ENCODE measurements at regions of chr5 and their contacts with region 1.

Region 1: DNA sequence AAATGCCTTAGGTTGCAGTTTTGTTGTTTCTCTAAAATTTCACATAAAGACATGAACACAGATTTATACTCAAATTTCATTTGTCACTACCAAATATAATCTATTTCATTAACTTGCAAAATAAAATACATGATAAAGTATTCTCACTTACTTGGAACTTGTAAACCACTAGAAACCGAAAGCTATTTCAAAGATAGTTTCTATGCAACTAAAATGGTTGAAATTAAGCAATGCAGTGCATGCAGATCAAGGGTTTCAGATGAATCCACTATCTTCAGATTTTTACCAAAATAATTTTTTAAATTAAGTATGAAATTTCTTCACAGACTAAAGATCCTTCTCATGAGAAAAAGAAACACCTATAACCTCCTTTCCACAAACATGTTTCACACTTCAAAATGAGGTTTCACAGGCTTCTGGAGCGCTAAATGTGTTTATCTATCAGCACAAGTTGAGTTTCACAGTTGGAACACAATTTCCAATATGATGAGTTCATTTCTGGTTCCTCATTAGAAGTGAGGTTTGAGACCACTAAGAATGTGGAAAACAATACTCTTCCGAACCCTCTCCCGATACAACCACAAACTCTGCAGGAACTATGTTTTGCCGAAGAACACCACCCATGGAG is 63.9 kb downstream of the EPB41L4A start:
- DNase-seq: no peak
- CTCF ChIP-seq: no peak

Region 2: GRCh38 chr5:112116371-112116770 is 238.8 kb before region 1 on chr5:
- CTCF ChIA-PET with region 1: no interaction called
- POLR2A ChIA-PET with region 1: no interaction called
- DNase-seq: no peak
- CTCF ChIP-seq: no peak

Region 3: DNA sequence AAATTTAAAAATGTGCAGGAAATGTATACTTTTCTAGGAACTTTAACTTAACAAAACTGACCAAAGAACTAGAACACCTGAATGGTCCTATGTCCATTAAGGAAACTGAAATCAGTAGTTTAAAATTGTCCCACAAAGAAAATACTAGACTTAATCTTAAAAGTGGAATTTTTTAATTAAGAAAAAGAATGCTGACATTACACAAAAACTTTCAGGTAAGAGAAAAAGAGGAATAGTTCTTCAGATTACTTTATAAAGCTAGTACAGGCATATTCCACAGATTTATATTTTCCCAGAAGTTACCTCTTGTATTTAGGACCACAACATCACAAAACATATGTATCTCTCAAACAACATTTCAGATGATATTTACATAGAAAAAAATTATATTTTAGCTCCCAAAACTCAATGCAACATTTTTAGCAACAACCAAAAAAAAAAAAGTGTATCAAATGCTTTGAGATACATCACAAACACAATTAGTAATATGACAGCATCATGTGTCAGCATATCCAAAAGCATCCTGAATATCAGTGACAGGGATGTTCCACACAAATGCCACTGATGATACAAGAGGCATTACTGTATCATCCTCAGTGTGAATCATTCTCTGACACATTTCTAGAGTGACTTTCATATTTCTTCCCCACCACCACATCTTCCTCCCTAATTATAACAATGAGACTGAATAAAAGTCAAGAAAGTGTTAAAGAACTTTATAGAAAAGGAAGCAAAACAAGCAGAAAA is 200.1 kb before region 1 on chr5:
- CTCF ChIA-PET with region 1: no interaction called
- POLR2A ChIA-PET with region 1: no interaction called
- DNase-seq: no peak
- CTCF ChIP-seq: no peak

Region 4: DNA sequence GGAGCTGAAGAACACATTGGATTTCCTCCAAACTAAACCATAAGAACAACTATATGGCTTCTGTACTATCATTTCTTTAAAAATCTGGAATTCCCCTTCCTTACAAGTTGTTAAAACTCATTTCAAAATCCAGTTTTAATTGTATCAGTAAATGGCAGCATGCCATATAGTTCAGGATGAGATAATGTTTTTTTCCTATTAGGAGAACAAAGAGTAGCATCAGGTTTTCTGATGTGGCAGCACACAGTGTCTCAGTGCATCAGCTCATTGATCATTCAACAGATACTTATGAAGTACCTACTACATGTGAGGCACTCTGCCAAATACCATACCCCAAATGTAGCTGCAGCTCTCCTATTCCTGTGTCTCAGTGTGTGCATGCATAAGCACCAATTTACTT is 97.2 kb before region 1 on chr5:
- CTCF ChIA-PET with region 1: no interaction called
- POLR2A ChIA-PET with region 1: interaction called, 10 read pairs
- DNase-seq: no peak
- CTCF ChIP-seq: no peak

Region 5: GRCh38 chr5:112329419-112330090 is 25.6 kb before region 1 on chr5:
- CTCF ChIA-PET with region 1: no interaction called
- POLR2A ChIA-PET with region 1: no interaction called
- DNase-seq: peak; percentile 29
- CTCF ChIP-seq: no peak

Measured in GM10248 (cell line).